ENCODE measurements at regions of chr2 and their contacts with region 1.

Region 1: GRCh38 chr2:241355983-241356870 is at the start of gene FARP2:
- DNase-seq: peak; percentile 95
- H3K4me3 Mint-ChIP-seq: peak within 1 kb of the TSS; percentile 84
- H3K27ac Mint-ChIP-seq: peak within 1 kb of the TSS; percentile 83
- H3K4me1 Mint-ChIP-seq: peaks cover 22% of the 10 kb centered on the region
- H3K27me3 Mint-ChIP-seq: peaks cover 2% of the 10 kb centered on the region
- total RNA-seq, gene FARP2: 36.6 and 40.9 TPM in 2 replicates

Region 2: GRCh38 chr2:241102239-241102803 is 253.9 kb before region 1 on chr2 and contains the start of gene MTERF4:
- intact Hi-C with region 1: loop called (anchors 1 kb)
- DNase-seq: peak; percentile 86
- H3K4me3 Mint-ChIP-seq: peak within 1 kb of the TSS; percentile 94
- H3K27ac Mint-ChIP-seq: peak within 1 kb of the TSS; percentile 98
- H3K4me1 Mint-ChIP-seq: peaks cover 41% of the 10 kb centered on the region
- H3K27me3 Mint-ChIP-seq: no peaks in the 10 kb centered on the region
- total RNA-seq, gene MTERF4: 40.5 and 43.3 TPM in 2 replicates

Region 3: DNA sequence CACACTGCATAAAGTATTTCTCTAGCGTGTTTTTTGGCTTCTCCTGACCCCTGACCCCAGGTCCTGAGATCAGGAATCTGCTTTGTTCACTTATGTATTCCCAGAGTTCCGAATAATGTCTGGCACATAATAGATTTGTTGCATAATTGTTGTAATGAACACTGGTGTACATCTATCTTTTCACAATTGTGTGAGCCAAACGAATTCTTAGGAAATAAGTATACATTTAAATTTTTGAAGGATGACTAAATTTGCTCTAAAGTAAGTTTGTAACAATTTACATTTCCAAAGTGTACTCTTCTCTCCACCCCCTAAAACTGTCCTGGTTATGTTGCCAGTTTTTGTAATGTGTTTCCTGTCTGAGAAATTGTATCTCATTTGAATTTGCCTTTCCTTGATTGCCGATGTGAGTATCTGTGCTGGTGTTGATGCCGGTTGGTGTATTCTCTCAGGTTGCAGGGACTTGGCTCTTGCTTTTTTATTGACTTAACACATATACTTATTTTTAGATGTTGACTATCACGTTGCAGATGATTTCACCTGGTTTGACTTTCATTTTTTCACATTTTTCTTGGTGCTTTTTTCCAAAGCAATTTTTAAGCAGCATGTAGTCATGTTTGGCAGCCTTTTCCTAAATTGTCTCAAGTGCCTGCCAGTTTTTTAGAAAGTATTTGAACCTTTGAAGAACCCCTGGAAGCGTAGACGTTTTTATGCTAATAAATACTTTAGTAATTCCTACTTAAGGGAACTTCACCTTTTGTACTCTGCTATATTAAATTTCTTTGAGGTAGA is 16.2 kb before region 1 on chr2:
- intact Hi-C with region 1: loop called (anchors 1 kb)
- DNase-seq: no peak
- H3K4me3 Mint-ChIP-seq: peak overlapping the region; percentile 11
- H3K27ac Mint-ChIP-seq: no peak overlapping the region
- H3K4me1 Mint-ChIP-seq: peaks cover 46% of the 10 kb centered on the region
- H3K27me3 Mint-ChIP-seq: no peaks in the 10 kb centered on the region

Region 4: DNA sequence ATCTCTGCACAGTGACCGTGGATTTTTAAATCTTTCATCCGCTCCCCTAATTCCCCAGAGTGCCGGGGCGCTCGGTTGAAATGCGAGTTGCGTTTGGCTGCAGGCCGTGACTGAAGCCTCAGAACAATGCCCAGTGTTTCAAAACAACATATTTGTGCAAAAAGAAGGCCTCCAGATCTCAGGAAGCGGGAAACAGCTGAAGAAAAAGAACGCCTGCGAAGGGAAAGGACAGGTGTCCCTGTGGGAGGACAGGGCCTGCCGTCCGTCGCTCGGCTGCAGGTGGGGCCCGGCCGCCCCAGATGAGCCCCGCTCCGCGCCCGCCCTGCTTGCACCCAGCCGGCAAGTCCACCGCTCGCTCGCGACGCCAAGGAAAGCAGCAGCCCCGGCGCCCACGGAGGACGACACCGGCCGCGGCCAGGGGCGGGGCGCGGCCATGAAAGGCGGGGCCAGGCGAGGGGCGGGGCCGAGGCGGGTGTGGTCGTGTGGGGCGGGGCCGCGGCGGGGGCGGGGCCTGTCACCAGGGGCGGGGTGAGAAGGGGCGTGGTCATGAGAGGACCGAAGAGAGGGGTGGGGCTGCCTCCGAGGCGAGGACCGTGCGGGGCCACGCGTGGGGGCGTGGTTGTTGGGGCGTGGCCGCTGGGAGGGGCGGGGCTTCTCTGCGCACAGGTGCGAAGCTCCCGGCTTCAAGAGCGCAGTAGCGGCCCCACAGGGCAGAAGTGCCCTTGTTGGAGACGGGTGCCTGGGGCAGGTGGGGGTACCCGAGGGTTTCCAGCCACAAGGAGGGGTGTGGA is 184.7 kb after region 1 on chr2:
- intact Hi-C with region 1: loop called (anchors 1 kb)
- DNase-seq: peak; percentile 59
- H3K4me3 Mint-ChIP-seq: peak overlapping the region; percentile 70
- H3K27ac Mint-ChIP-seq: no peak overlapping the region
- H3K4me1 Mint-ChIP-seq: no peaks in the 10 kb centered on the region
- H3K27me3 Mint-ChIP-seq: peaks cover 9% of the 10 kb centered on the region

Region 5: GRCh38 chr2:241686649-241687425 is 330.6 kb after region 1 on chr2 and contains the start of gene DTYMK:
- intact Hi-C with region 1: loop called (anchors 1 kb)
- DNase-seq: peak; percentile 97
- H3K4me3 Mint-ChIP-seq: peak within 1 kb of the TSS; percentile 96
- H3K27ac Mint-ChIP-seq: peak within 1 kb of the TSS; percentile 98
- H3K4me1 Mint-ChIP-seq: peaks cover 28% of the 10 kb centered on the region
- H3K27me3 Mint-ChIP-seq: no peaks in the 10 kb centered on the region
- total RNA-seq, gene DTYMK: 102 and 106 TPM in 2 replicates

Measured in activated T-helper 1 cell treated with anti-CD3 and anti-CD28 coated beads, Interleukin-12 subunit alpha, Interleukin-12 subunit beta, Interleukin-2, Interleukin-4 antibody, amounts not matched to agents 30 ng/mL and 10 ng/mL and 1 ng/mL, durations not matched to agents 14 hours and 24 hours and 36 hours (primary cell).